PC-9 (cell line): ENCODE measurements at regions of chr3 and their contacts with region 1.

Region 1: GRCh38 chr3:51498876-51499738 is 708 bp downstream of the DCAF1 start:
- DNase-seq: peak; percentile 83 to 95
- H3K4me3 ChIP-seq: peak overlapping the region; percentile 61
- H3K27ac ChIP-seq: peak overlapping the region; percentile 78
- H3K4me1 ChIP-seq: no peaks in the 10 kb centered on the region; the same call in 1 of the 2 replicates
- H3K27me3 ChIP-seq: no peaks in the 10 kb centered on the region
- CTCF ChIP-seq: no peak

Region 2: GRCh38 chr3:50568947-50569749 is 930.0 kb before region 1 on chr3 and contains the start of gene HEMK1:
- CTCF ChIA-PET with region 1: no interaction called
- POLR2A ChIA-PET with region 1: interaction called, 10 read pairs
- intact Hi-C with region 1: no loop called
- DNase-seq: peak; percentile 82 to 96
- H3K4me3 ChIP-seq: peak within 1 kb of the TSS; percentile 94
- H3K27ac ChIP-seq: 0 out of 2 replicates have a peak within 1 kb of the TSS, but pooled peaks have one; percentile 24
- H3K4me1 ChIP-seq: peaks cover 13% of the 10 kb centered on the region
- H3K27me3 ChIP-seq: no peaks in the 10 kb centered on the region
- CTCF ChIP-seq: no peak
- total RNA-seq, gene HEMK1: 20.6 and 24.2 TPM in 2 replicates

Region 3: DNA sequence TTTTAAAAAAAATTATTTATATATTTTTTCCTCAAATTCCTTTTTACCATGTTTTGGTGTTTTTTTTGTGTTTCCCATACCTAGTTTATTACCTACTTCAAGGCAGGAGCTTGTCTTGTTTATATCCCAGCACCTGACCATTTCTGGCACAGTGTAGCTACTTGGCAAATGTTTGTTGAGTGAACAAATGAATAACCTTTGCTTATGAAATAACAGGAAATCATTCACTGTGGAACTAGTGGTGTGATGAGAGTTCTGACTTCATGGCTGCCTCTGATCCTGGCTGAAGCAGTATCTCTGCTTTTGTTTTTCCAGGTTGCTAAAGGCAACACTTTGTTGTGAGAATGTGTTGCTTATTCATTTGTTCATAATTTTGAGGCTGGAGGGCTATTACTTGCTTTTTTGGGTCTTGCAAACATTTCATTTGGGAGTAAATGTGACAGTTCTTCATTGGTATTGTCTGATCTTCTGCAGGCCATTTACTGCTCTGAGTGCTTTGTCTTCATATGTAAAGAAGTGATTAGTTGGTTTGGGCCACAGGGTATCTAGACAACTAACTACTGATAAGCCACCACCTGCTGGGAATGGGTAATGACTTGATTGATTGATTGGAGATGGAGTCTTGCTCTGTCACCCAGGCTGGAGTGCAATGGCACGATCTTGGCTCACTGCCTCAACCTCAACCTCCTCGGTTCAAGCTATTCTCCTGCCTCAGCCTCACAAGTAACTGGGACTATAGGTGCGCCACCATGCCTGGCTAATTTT is 45.1 kb after region 1 on chr3:
- CTCF ChIA-PET with region 1: no interaction called
- POLR2A ChIA-PET with region 1: interaction called, 11 read pairs
- intact Hi-C with region 1: no loop called
- DNase-seq: no peak
- H3K4me3 ChIP-seq: no peak overlapping the region
- H3K27ac ChIP-seq: no peak overlapping the region
- H3K4me1 ChIP-seq: peaks cover 8% of the 10 kb centered on the region
- H3K27me3 ChIP-seq: no peaks in the 10 kb centered on the region
- CTCF ChIP-seq: no peak

Region 4: DNA sequence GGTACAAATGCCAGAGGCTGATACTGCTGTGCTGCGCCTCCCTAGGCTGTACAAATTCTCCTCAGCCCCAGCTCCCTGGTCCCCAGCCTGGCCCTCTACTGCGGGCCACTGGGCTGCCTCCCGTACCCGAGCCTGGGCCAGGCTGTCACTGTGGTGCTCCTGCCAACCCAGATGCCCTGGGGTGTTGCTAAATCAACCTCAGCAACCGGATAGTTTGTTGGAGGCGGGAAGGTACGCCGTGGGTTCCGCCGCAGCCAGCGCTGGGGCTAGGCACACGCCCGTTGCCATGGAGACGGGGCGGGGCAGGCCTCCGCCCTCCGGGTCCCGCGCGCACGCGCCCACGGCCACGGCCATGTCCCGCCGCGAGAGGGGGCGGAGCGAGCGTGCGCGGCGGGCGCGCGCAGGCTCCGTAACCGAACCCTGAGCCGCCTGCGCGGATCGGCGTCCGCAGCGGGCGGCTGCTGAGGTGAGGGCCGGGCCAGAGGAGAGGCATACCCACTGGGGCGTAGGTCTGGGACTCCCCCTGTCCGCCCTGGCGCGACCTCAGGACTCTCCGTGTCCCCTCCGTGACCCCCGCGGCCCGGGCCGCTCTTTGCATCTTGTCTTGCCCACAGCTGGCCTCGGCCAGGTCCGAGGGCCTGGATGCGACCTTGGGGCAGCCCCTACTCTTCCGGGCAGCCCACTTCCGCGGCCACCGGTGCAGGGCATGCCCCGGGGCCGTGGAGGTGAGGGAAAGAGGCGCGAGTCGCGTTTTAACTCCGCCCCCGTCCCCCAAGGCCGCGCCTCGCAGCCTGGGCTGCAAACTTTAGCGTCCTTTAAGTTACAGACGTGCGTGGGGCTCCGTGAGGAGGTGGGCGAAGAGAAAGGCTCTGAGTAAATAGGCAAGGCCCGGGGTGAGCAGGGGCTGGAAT is 172.0 kb after region 1 on chr3 and contains the start of gene TEX264:
- CTCF ChIA-PET with region 1: interaction called, 28 read pairs
- POLR2A ChIA-PET with region 1: interaction called, 11 read pairs
- intact Hi-C with region 1: loop called (anchors 1 kb)
- DNase-seq: peak; percentile 61 to 93
- H3K4me3 ChIP-seq: peak within 1 kb of the TSS; percentile 82
- H3K27ac ChIP-seq: peak within 1 kb of the TSS; percentile 47; the same call in 1 of the 2 replicates
- H3K4me1 ChIP-seq: peaks cover 18% of the 10 kb centered on the region
- H3K27me3 ChIP-seq: no peaks in the 10 kb centered on the region
- CTCF ChIP-seq: no peak
- total RNA-seq, gene TEX264: 44.3 and 53.0 TPM in 2 replicates

Region 5: DNA sequence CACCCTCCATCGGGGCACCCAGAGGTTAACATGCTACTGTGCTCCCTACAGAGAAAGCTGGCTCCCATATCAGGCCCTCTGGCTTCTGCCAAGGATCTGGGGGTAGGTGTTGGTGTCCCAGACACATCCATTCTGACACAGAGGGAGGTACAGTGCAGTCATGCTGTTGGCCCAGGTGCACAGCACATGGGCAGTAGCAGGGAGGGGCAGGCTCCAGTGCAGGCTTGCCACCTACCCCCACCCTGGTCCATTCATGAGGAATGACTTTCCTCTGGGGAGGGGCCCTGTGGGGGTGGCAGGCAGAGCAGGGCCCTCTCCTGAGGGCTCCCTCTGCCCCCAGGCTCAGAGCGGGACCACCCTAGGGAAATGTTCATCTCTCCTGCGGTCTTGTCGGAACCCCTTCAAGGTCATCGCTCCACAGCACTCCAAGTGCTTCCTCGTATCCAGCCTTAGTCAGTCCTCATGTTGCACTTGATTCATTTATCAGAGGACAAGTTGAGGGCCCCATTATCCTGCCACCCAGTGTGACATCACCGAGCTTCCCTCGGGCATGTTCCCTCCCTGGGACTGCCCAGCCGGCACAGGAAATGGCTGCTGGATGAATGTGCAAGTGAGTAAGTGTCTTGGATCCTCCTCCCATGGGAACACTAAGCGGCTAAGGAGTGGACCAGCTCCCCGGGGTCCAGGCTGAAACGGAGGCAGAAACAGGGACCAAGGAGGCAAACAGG is 547.2 kb after region 1 on chr3:
- CTCF ChIA-PET with region 1: no interaction called
- POLR2A ChIA-PET with region 1: interaction called, 14 read pairs
- intact Hi-C with region 1: no loop called
- DNase-seq: peak; percentile 84 to 93
- H3K4me3 ChIP-seq: peak overlapping the region; percentile 38; the same call in 1 of the 2 replicates
- H3K27ac ChIP-seq: peak overlapping the region; percentile 83
- H3K4me1 ChIP-seq: peaks cover 25% of the 10 kb centered on the region
- H3K27me3 ChIP-seq: no peaks in the 10 kb centered on the region
- CTCF ChIP-seq: no peak

Region 6: DNA sequence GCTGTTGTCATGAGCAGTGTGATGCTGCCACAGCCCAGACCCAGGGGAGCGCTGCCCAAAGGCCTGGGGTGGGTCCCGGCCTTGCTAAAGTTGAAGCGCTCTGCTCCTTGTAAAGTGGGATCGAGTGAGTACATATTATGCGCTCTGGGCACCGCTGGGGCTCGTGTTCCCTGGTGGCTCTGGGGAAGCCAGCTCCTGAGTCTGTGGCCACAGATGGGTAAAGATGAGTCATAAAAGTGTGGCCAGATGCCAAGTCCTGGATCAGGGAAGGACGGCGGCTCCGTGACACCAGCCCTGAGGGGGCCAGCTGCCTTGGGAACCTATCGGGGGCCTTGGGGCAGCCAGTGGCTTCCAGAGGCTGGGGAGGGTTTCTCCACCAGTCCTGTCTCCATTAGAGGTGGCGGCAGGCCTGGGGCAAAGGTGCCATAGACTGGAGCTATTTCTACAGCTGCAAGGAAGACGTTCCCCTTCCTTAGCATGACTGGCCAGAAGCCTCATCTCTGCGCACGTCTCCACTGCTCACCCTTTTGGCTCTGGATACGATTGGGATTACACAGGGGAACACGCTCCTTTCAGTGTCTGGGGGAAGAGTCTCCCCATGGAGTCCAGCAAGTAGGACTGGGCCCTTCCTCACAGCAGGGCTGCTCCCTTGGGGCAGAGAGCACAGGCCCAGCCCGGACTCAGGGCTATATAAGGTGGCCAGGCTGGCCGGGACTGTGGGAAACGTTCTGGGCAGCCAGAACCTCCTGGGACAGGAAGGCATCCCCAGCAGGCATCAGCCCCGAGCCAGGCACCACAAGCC is 1332.6 kb after region 1 on chr3:
- CTCF ChIA-PET with region 1: interaction called, 12 read pairs
- POLR2A ChIA-PET with region 1: no interaction called
- intact Hi-C with region 1: no loop called
- DNase-seq: peak; percentile 71 to 81
- H3K4me3 ChIP-seq: no peak overlapping the region
- H3K27ac ChIP-seq: no peak overlapping the region
- H3K4me1 ChIP-seq: peaks cover 11% of the 10 kb centered on the region
- H3K27me3 ChIP-seq: no peaks in the 10 kb centered on the region
- CTCF ChIP-seq: no peak